ENCODE measurements at regions of chr4 and their contacts with region 1.

Region 1: DNA sequence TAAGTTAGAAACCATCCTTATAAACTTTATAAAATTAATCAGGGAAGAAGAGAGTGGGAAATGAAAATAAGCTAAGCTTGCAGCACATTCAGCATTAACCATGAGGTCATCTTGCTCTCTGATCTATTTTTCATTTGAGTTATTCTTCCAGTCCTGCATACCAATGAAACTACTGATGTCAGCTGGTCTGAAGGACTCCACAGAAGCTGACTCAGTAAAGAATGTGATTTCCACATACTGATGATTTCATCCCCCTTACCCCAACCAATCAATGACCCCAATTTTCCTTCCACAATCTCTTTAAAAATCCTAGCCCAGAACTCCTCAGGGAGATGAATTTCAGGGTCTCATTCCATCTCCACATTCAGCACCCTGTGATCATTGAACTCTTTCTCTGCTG is 18.8 kb upstream of the DSPP start:
- DNase-seq: no peak
- H3K4me3 ChIP-seq: no peak overlapping the region
- H3K27ac ChIP-seq: peak overlapping the region in 1 of 2 donors; percentile 13
- H3K4me1 ChIP-seq: peaks cover 5 to 17% of the 10 kb centered on the region in 2 donors
- H3K27me3 ChIP-seq: no peaks in the 10 kb centered on the region
- CTCF ChIP-seq: no peak

Region 2: GRCh38 chr4:87555773-87556619 is 33.5 kb before region 1 on chr4:
- intact Hi-C with region 1: loop called (anchors 2 kb)
- DNase-seq: peak; percentile 27 to 85
- H3K4me3 ChIP-seq: no peak overlapping the region
- H3K27ac ChIP-seq: peak overlapping the region; percentile 82 to 91
- H3K4me1 ChIP-seq: peaks cover 7% of the 10 kb centered on the region in 2 donors
- H3K27me3 ChIP-seq: no peaks in the 10 kb centered on the region
- CTCF ChIP-seq: no peak